ENCODE measurements at regions of chr1 and their contacts with region 1.

Region 1: DNA sequence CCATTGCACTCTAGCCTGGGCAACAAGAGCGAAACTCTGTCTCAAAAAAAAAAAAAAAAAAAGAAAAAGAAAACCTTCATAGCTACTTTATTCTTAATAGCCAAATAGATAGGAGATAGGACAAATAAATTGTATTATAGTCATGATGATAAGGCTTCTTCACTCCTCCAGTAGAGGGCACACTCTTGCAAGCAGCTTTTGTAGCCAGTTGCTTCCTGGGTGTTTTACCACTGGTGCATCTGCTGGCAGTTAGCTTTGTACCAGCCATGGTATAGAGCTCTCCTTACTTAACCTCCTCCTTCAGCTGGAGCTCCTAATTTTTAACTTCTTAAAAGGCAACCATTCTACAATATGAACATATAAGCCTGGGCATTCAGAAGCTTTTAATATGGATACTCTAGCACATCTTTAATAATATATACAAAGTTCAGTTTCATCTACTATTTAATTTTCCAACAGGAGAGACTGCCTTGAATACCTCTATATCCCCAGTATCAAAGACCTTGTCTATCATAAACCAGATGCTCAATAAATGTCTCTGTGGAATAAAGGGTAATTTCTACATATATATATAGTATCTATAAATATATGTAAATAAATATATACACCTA is 35.8 kb downstream of the EVI5 start:
- DNase-seq: peak in 1 of 2 experiments; percentile 49
- H3K4me3 ChIP-seq: no peak overlapping the region
- H3K4me3 Mint-ChIP-seq: no peak overlapping the region
- H3K27ac Mint-ChIP-seq: no peak overlapping the region
- H3K4me1 ChIP-seq: peaks cover 6% of the 10 kb centered on the region; the same call in 1 of the 2 replicates
- H3K4me1 Mint-ChIP-seq: peaks cover 11% of the 10 kb centered on the region
- H3K27me3 ChIP-seq: no peaks in the 10 kb centered on the region
- H3K27me3 Mint-ChIP-seq: no peaks in the 10 kb centered on the region
- CTCF ChIP-seq: peak; percentile 42 to 51

Region 2: DNA sequence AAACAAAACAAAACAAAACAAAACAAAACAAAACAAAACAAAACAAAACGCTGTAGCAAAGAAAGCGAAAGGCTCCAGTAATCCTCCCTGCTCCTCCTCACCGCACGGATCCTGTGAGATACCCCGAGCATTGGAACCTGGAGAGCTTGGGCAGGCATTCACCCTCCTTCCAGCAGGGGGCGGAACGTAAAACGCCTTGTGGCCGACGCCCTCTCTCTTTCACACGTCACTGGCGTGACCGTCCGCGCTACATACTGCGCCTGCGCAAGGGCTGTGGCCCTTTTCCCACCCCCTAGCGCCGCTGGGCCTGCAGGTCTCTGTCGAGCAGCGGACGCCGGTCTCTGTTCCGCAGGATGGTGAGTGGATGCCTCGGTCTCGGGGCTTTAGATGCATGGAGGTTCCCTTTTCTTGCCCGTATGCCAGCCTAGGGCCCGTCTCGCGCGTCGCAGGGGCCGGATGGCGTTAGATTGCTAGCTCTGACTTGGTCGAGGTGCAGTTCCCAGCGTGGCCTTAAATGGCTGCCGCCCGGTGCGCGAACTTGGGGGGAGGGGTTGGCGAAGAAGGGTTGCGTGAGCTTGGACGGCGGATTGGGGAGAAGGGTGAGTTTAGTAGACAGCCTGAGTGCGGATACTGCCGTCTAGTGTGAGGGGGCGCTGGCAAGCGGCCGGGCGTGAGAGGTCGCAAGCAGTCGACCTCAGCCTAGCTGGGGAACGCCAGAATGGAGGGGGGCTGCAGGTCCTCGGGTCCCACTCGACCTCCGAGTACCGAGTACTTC is 82.8 kb after region 1 on chr1 and contains the start of gene RPL5:
- CTCF ChIA-PET with region 1: interaction called, 10 read pairs
- POLR2A ChIA-PET with region 1: no interaction called
- intact Hi-C with region 1: loop called (anchors 5 kb)
- DNase-seq: peak; percentile 94 to 95
- H3K4me3 ChIP-seq: peak within 1 kb of the TSS; percentile 70
- H3K4me3 Mint-ChIP-seq: peak within 1 kb of the TSS; percentile 98
- H3K27ac Mint-ChIP-seq: peak within 1 kb of the TSS; percentile 99
- H3K4me1 ChIP-seq: peaks cover 15% of the 10 kb centered on the region
- H3K4me1 Mint-ChIP-seq: no peaks in the 10 kb centered on the region
- H3K27me3 ChIP-seq: no peaks in the 10 kb centered on the region
- H3K27me3 Mint-ChIP-seq: no peaks in the 10 kb centered on the region
- CTCF ChIP-seq: peak; percentile 70 to 80
- total RNA-seq, gene RPL5: 1,118 and 1,177 TPM in 2 replicates

Measured in Caco-2 (cell line).